ENCODE measurements at regions of chr2 and their contacts with region 1.

Region 1: DNA sequence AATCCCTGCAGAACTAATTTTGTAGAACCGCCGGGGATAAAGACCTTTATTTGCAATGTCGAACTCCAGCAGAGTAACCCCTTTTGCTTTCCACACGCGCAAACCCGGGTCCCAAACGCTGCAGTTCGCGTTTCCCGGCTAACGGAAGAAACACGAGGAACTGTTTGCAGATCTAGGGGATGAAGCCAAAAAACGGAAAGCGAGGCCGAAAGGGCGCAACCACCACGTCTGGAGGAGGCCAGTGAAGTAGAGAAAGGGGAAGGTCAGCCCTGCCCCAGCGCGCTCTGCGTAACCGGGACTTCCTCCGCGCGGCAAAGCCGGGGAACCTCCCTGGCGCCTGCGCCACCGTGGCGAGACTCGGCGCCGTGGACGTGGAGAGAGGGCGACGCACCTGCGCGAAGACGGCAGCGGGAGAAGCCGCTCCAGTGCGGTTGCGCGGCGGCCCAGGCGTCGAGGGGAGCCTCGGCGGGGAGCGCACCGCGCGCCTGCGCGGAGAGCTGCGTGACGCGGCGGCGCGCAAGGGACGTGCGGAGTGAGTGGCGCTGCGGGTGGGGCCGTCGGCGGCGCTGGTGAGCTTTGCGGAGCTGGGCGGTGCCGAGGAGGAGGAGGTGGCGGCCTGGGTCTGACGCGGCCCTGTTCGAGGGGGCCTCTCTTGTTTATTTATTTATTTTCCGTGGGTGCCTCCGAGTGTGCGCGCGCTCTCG is at the start of gene PPP1CB:
- DNase-seq: peak; percentile 95 to 99 (median 99)
- ATAC-seq: peak; percentile 92
- H3K4me3 ChIP-seq: peak within 1 kb of the TSS; percentile 97
- H3K4me3 Mint-ChIP-seq: peak within 1 kb of the TSS; percentile 93 to 100 (median 96)
- H3K27ac ChIP-seq: peak within 1 kb of the TSS; percentile 99
- H3K27ac Mint-ChIP-seq: peak within 1 kb of the TSS; percentile 96 to 99 (median 98)
- H3K4me1 ChIP-seq: peaks cover 42 to 44% of the 10 kb centered on the region in 2 donors
- H3K4me1 Mint-ChIP-seq: peaks cover 35 to 67% (median 64%) of the 10 kb centered on the region in 7 donors
- H3K27me3 ChIP-seq: no peaks in the 10 kb centered on the region
- H3K27me3 Mint-ChIP-seq: no peaks in the 10 kb centered on the region
- total RNA-seq, gene PPP1CB: 202 to 223 (median 210) TPM

Region 2: GRCh38 chr2:27771548-27772335 is 979.7 kb before region 1 on chr2 and contains the start of gene MRPL33:
- CTCF ChIA-PET with region 1: no interaction called
- POLR2A ChIA-PET with region 1: no interaction called
- intact Hi-C with region 1: loop called (anchors 5 to 10 kb)
- DNase-seq: peak; percentile 85 to 92 (median 89)
- ATAC-seq: peak; percentile 97
- H3K4me3 ChIP-seq: peak within 1 kb of the TSS; percentile 92
- H3K4me3 Mint-ChIP-seq: peak within 1 kb of the TSS; percentile 96 to 100 (median 99)
- H3K27ac ChIP-seq: peak within 1 kb of the TSS; percentile 92
- H3K27ac Mint-ChIP-seq: peak within 1 kb of the TSS; percentile 97 to 100 (median 100)
- H3K4me1 ChIP-seq: peaks cover 10 to 20% of the 10 kb centered on the region in 2 donors
- H3K4me1 Mint-ChIP-seq: peaks cover 32 to 59% (median 52%) of the 10 kb centered on the region in 7 donors
- H3K27me3 ChIP-seq: no peaks in the 10 kb centered on the region
- H3K27me3 Mint-ChIP-seq: peaks cover 0 to 8% (median 0%) of the 10 kb centered on the region in 5 donors
- total RNA-seq, gene MRPL33: 27.3 to 39.4 (median 35.1) TPM

Region 3: GRCh38 chr2:28594289-28595108 is 156.9 kb before region 1 on chr2:
- CTCF ChIA-PET with region 1: interaction called, 119 read pairs
- POLR2A ChIA-PET with region 1: interaction called, 86 read pairs
- intact Hi-C with region 1: loop called (anchors 1 kb)
- DNase-seq: peak; percentile 72 to 86 (median 79)
- ATAC-seq: peak; percentile 93
- H3K4me3 ChIP-seq: peak overlapping the region; percentile 33
- H3K4me3 Mint-ChIP-seq: peak overlapping the region; percentile 60 to 83 (median 69)
- H3K27ac ChIP-seq: peak overlapping the region; percentile 71
- H3K27ac Mint-ChIP-seq: peak overlapping the region; percentile 76 to 98 (median 94)
- H3K4me1 ChIP-seq: peaks cover 9 to 15% of the 10 kb centered on the region in 2 donors
- H3K4me1 Mint-ChIP-seq: peaks cover 12 to 25% (median 19%) of the 10 kb centered on the region in 7 donors
- H3K27me3 ChIP-seq: no peaks in the 10 kb centered on the region
- H3K27me3 Mint-ChIP-seq: no peaks in the 10 kb centered on the region

Region 4: GRCh38 chr2:28681158-28681571 is 70.2 kb before region 1 on chr2:
- CTCF ChIA-PET with region 1: no interaction called
- POLR2A ChIA-PET with region 1: no interaction called
- intact Hi-C with region 1: loop called (anchors 1 to 5 kb)
- DNase-seq: peak; percentile 22 to 73 (median 31)
- ATAC-seq: peak; percentile 95
- H3K4me3 ChIP-seq: no peak overlapping the region
- H3K4me3 Mint-ChIP-seq: peak overlapping the region in 8 of 10 donors; percentile 21 to 71 (median 46)
- H3K27ac ChIP-seq: no peak overlapping the region
- H3K27ac Mint-ChIP-seq: peak overlapping the region; percentile 32 to 90 (median 80)
- H3K4me1 ChIP-seq: peaks cover 10 to 15% of the 10 kb centered on the region in 2 donors
- H3K4me1 Mint-ChIP-seq: peaks cover 26 to 45% (median 30%) of the 10 kb centered on the region in 7 donors
- H3K27me3 ChIP-seq: no peaks in the 10 kb centered on the region
- H3K27me3 Mint-ChIP-seq: no peaks in the 10 kb centered on the region

Region 5: GRCh38 chr2:28721601-28722191 is 29.7 kb before region 1 on chr2:
- CTCF ChIA-PET with region 1: no interaction called
- POLR2A ChIA-PET with region 1: no interaction called
- intact Hi-C with region 1: no loop called
- DNase-seq: no peak
- ATAC-seq: no peak
- H3K4me3 ChIP-seq: no peak overlapping the region
- H3K4me3 Mint-ChIP-seq: no peak overlapping the region
- H3K27ac ChIP-seq: no peak overlapping the region
- H3K27ac Mint-ChIP-seq: no peak overlapping the region
- H3K4me1 ChIP-seq: no peaks in the 10 kb centered on the region
- H3K4me1 Mint-ChIP-seq: peaks cover 0 to 6% (median 0%) of the 10 kb centered on the region in 7 donors
- H3K27me3 ChIP-seq: no peaks in the 10 kb centered on the region
- H3K27me3 Mint-ChIP-seq: peaks cover 0 to 12% (median 0%) of the 10 kb centered on the region in 5 donors

Region 6: DNA sequence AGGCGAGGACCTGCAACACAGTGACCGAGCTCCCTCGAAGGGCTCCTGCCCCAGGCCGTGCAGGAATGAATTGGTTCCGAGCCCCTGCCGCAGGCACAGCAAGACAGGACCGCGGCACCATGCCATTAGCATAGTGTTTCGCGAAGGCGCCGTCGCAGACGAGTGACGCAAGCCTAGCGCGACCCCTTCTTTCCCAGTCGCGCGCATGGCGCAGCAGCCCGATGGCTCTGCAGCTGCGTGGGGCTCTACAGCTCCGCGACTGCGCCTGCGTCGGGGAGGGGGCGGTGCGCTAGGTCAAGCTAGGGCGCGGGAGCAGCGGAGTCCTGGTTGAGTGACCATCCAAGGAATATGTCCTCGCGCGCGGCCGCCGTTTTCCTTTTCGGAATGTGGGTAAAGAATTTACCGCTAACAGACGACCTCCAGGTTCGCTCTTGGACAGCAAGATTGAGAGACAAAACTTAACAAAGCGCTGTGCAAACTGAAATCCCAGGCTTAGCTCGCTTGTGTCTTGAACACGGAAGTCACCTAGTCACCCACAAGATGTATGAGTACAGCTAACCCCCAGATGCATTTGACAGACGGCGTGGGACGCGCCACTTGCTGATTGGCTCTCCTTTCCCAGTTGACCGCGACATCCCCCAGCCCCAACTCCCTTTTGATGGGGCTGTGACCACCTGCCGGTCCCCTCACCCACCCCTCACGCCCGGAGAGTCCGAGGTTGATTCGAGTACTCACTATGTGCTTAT is 118.9 kb after region 1 on chr2 and contains the start of gene TRMT61B:
- CTCF ChIA-PET with region 1: no interaction called
- POLR2A ChIA-PET with region 1: interaction called, 6 read pairs
- intact Hi-C with region 1: loop called (anchors 1 to 2 kb)
- DNase-seq: peak; percentile 94 to 97 (median 95)
- ATAC-seq: peak; percentile 98
- H3K4me3 ChIP-seq: peak within 1 kb of the TSS; percentile 96
- H3K4me3 Mint-ChIP-seq: peak within 1 kb of the TSS; percentile 90 to 98 (median 96)
- H3K27ac ChIP-seq: peak within 1 kb of the TSS; percentile 87
- H3K27ac Mint-ChIP-seq: peak within 1 kb of the TSS; percentile 95 to 100 (median 98)
- H3K4me1 ChIP-seq: peaks cover 19 to 22% of the 10 kb centered on the region in 2 donors
- H3K4me1 Mint-ChIP-seq: peaks cover 22 to 48% (median 37%) of the 10 kb centered on the region in 7 donors
- H3K27me3 ChIP-seq: no peaks in the 10 kb centered on the region
- H3K27me3 Mint-ChIP-seq: peaks cover 0 to 6% (median 2%) of the 10 kb centered on the region in 5 donors
- total RNA-seq, gene TRMT61B: 14.8 to 24.5 (median 20.5) TPM